CD4-positive, alpha-beta memory T cell (primary cell): ENCODE measurements at regions of chr1 and their contacts with region 1.

Region 1: DNA sequence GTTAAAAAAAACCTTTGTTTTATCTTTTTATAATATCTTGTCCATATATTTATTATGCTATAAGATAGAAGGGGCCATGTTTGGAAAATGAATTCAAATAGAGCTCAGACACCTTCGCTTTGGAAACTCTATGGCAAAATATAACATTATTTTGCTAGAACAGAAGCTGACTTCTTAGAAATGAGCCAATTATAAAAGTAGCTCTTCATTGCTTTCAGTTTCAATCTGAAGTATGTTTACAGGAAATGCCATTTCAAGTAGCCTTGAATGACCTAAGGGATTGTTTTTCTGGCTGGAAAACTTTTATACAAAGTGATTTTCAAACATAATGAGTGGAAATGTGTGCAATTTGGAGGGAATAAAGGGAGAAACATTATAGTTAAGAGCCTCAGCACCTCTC is 37.8 kb upstream of the GBP5 start:
- DNase-seq: peak in 3 of 5 donors; percentile 17 to 27 (median 18)
- H3K4me3 ChIP-seq: peak overlapping the region in 1 of 2 donors; percentile 7
- H3K4me3 Mint-ChIP-seq: peak overlapping the region; percentile 37 to 84 (median 70)
- H3K27ac ChIP-seq: no peak overlapping the region
- H3K27ac Mint-ChIP-seq: peak overlapping the region; percentile 62 to 94 (median 81)
- H3K4me1 ChIP-seq: peaks cover 62% of the 10 kb centered on the region
- H3K4me1 Mint-ChIP-seq: peaks cover 30 to 66% (median 47%) of the 10 kb centered on the region in 4 donors
- H3K27me3 ChIP-seq: no peaks in the 10 kb centered on the region
- H3K27me3 Mint-ChIP-seq: no peaks in the 10 kb centered on the region

Region 2: DNA sequence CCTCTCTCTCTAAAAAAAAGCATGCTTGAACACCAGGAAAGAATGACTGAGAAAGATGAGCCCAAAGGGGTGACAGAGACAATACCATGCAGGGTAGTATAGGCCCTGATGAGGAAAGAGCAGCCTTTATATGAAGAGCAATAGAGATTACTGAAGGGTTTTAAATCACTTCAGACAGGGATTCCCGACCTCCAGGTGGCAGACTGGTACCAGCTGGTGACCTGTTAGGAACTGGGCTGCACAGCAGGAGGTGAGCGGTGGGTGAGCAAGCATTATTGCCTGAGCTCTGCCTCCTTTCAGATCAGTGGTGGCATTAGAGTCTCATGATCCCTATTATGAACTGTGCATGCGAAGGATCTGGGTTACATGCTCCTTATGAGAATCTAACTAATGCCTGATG is 388.3 kb before region 1 on chr1:
- CTCF ChIA-PET with region 1: no interaction called
- POLR2A ChIA-PET with region 1: no interaction called
- intact Hi-C with region 1: no loop called
- DNase-seq: no peak
- H3K4me3 ChIP-seq: no peak overlapping the region
- H3K4me3 Mint-ChIP-seq: no peak overlapping the region
- H3K27ac ChIP-seq: no peak overlapping the region
- H3K27ac Mint-ChIP-seq: peak overlapping the region in 2 of 7 donors; percentile 18 to 38
- H3K4me1 ChIP-seq: no peaks in the 10 kb centered on the region
- H3K4me1 Mint-ChIP-seq: no peaks in the 10 kb centered on the region
- H3K27me3 ChIP-seq: no peaks in the 10 kb centered on the region
- H3K27me3 Mint-ChIP-seq: no peaks in the 10 kb centered on the region

Region 3: GRCh38 chr1:89221341-89221740 is 89.2 kb before region 1 on chr1:
- CTCF ChIA-PET with region 1: no interaction called
- POLR2A ChIA-PET with region 1: no interaction called
- intact Hi-C with region 1: no loop called
- DNase-seq: no peak
- H3K4me3 ChIP-seq: no peak overlapping the region
- H3K4me3 Mint-ChIP-seq: no peak overlapping the region
- H3K27ac ChIP-seq: no peak overlapping the region
- H3K27ac Mint-ChIP-seq: no peak overlapping the region
- H3K4me1 ChIP-seq: no peaks in the 10 kb centered on the region
- H3K4me1 Mint-ChIP-seq: no peaks in the 10 kb centered on the region
- H3K27me3 ChIP-seq: no peaks in the 10 kb centered on the region
- H3K27me3 Mint-ChIP-seq: no peaks in the 10 kb centered on the region

Region 4: DNA sequence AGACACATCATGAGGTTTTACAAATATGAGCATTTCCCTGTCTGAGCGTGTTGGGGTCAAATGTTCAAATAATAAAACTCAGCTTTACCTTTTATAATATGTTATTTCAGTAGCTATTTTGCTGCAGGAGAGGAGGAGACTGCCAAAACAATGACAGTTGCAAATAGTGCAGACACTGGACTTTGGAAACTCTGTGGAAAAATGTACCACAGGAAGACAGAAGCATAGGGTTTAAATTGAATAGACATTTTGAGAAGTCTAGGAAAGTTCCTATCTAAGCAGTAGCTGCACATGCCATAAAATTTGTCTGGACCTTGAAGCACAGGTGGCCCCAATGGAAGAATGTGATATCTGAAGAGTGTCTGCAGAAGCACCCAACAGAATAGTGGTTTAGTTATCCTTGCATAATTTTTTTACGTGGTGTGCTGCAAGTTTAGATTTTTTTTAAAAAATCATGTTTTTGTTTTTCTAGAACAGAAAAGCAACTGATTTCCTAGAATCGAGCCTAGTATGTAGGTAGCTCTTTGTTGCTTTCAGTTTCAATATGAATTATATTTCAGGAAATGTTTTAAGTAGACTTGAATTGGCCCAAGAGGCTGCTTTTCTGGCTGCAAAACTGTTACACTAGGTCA is 23.8 kb before region 1 on chr1:
- CTCF ChIA-PET with region 1: interaction called, 9 read pairs
- POLR2A ChIA-PET with region 1: interaction called, 52 read pairs
- intact Hi-C with region 1: no loop called
- DNase-seq: peak in 4 of 5 donors; percentile 39 to 58 (median 46)
- H3K4me3 ChIP-seq: peak overlapping the region; percentile 14 to 21
- H3K4me3 Mint-ChIP-seq: peak overlapping the region; percentile 45 to 78 (median 76)
- H3K27ac ChIP-seq: peak overlapping the region; percentile 61
- H3K27ac Mint-ChIP-seq: peak overlapping the region; percentile 83 to 96 (median 94)
- H3K4me1 ChIP-seq: peaks cover 67% of the 10 kb centered on the region
- H3K4me1 Mint-ChIP-seq: peaks cover 60 to 76% (median 69%) of the 10 kb centered on the region in 4 donors
- H3K27me3 ChIP-seq: no peaks in the 10 kb centered on the region
- H3K27me3 Mint-ChIP-seq: no peaks in the 10 kb centered on the region

Region 5: DNA sequence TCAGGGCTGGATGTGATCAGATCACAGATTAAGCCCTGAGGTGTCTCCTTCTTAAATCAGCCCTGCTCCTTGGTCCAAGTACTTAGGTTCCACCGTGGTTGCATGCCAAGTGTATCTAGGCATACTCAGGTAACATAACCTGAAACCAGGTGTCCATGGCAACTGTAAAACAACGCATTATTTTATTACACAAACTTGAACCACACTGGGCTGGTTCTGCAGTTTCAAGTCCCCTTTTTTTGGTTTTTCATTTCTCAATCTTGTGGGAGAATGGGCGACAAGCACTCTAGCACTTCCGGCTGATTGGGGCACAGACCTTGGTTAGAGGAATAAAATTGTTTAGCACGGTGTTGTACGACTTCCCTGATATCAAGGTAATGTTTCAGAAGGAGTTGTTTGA is 118.6 kb after region 1 on chr1:
- CTCF ChIA-PET with region 1: no interaction called
- POLR2A ChIA-PET with region 1: no interaction called
- intact Hi-C with region 1: no loop called
- DNase-seq: no peak
- H3K4me3 ChIP-seq: no peak overlapping the region
- H3K4me3 Mint-ChIP-seq: no peak overlapping the region
- H3K27ac ChIP-seq: no peak overlapping the region
- H3K27ac Mint-ChIP-seq: no peak overlapping the region
- H3K4me1 ChIP-seq: no peaks in the 10 kb centered on the region
- H3K4me1 Mint-ChIP-seq: no peaks in the 10 kb centered on the region
- H3K27me3 ChIP-seq: no peaks in the 10 kb centered on the region
- H3K27me3 Mint-ChIP-seq: peaks cover 0 to 2% of the 10 kb centered on the region in 2 donors